ENCODE measurements at regions of chr10 and their contacts with region 1.

Region 1: GRCh38 chr10:119305860-119306513 is 98.6 kb downstream of the GRK5 start:
- DNase-seq: peak; percentile 93
- ATAC-seq: peak; percentile 73
- H3K4me3 Mint-ChIP-seq: peak overlapping the region; percentile 72
- H3K27ac Mint-ChIP-seq: peak overlapping the region; percentile 100
- H3K4me1 Mint-ChIP-seq: peaks cover 79% of the 10 kb centered on the region
- H3K27me3 Mint-ChIP-seq: peaks cover 2% of the 10 kb centered on the region

Region 2: GRCh38 chr10:119131512-119132240 is 174.3 kb before region 1 on chr10:
- CTCF ChIA-PET with region 1: no interaction called
- POLR2A ChIA-PET with region 1: no interaction called
- intact Hi-C with region 1: loop called in 1 of 2 experiments (anchors 2 kb)
- DNase-seq: peak; percentile 75
- ATAC-seq: peak; percentile 84
- H3K4me3 Mint-ChIP-seq: peak overlapping the region; percentile 78
- H3K27ac Mint-ChIP-seq: peak overlapping the region; percentile 99
- H3K4me1 Mint-ChIP-seq: peaks cover 50% of the 10 kb centered on the region
- H3K27me3 Mint-ChIP-seq: no peaks in the 10 kb centered on the region

Region 3: DNA sequence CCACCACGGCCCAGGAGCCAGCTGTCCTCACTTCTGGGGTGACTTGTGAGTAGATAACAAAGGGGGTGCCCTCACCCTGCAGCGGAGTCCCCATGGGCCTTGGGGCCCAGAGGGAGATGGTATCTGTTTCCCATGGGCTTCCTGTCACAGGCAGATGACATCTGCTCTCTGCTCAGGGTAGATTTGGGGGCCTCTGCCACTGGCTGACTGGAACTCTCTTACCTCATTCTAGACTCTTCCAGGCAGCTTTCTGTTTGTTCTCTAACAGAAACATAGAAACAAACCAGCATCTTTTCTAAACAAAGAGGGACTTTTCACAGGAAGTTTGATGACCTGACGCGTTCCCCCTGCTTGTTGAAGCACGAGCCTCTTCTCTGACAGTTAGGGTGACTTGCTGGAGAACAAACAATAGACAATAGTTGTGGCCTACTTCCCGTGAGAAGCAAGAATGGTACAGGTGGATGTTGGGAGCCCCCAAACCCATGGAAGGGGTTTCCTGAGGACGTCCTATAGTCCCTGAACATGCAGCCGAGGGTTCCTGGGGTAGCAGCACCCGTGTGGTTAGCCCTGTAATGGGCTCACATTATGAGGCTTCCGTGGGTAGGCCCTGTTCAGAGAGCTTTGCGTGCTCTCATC is 37.0 kb before region 1 on chr10:
- CTCF ChIA-PET with region 1: interaction called, 6 read pairs
- POLR2A ChIA-PET with region 1: interaction called, 5 read pairs
- intact Hi-C with region 1: loop called (anchors 1 kb)
- DNase-seq: peak; percentile 72
- ATAC-seq: peak; percentile 86
- H3K4me3 Mint-ChIP-seq: peak overlapping the region; percentile 5
- H3K27ac Mint-ChIP-seq: peak overlapping the region; percentile 96
- H3K4me1 Mint-ChIP-seq: peaks cover 49% of the 10 kb centered on the region
- H3K27me3 Mint-ChIP-seq: no peaks in the 10 kb centered on the region

Region 4: GRCh38 chr10:119517235-119518141 is 211.5 kb after region 1 on chr10:
- CTCF ChIA-PET with region 1: no interaction called
- POLR2A ChIA-PET with region 1: no interaction called
- intact Hi-C with region 1: loop called in 1 of 2 experiments (anchors 5 kb)
- DNase-seq: peak; percentile 86
- ATAC-seq: peak; percentile 66
- H3K4me3 Mint-ChIP-seq: peak overlapping the region; percentile 51
- H3K27ac Mint-ChIP-seq: peak overlapping the region; percentile 98
- H3K4me1 Mint-ChIP-seq: peaks cover 57% of the 10 kb centered on the region
- H3K27me3 Mint-ChIP-seq: no peaks in the 10 kb centered on the region

Region 5: GRCh38 chr10:119650692-119651513 is 344.9 kb after region 1 on chr10 and contains the start of gene BAG3:
- CTCF ChIA-PET with region 1: no interaction called
- POLR2A ChIA-PET with region 1: no interaction called
- intact Hi-C with region 1: loop called in 1 of 2 experiments (anchors 2 kb)
- DNase-seq: peak; percentile 91
- ATAC-seq: peak; percentile 48
- H3K4me3 Mint-ChIP-seq: peak within 1 kb of the TSS; percentile 84
- H3K27ac Mint-ChIP-seq: peak within 1 kb of the TSS; percentile 95
- H3K4me1 Mint-ChIP-seq: peaks cover 39% of the 10 kb centered on the region
- H3K27me3 Mint-ChIP-seq: no peaks in the 10 kb centered on the region
- total RNA-seq, gene BAG3: 23.8 to 30.7 TPM